ENCODE measurements at regions of chr12 and their contacts with region 1.

Region 1: DNA sequence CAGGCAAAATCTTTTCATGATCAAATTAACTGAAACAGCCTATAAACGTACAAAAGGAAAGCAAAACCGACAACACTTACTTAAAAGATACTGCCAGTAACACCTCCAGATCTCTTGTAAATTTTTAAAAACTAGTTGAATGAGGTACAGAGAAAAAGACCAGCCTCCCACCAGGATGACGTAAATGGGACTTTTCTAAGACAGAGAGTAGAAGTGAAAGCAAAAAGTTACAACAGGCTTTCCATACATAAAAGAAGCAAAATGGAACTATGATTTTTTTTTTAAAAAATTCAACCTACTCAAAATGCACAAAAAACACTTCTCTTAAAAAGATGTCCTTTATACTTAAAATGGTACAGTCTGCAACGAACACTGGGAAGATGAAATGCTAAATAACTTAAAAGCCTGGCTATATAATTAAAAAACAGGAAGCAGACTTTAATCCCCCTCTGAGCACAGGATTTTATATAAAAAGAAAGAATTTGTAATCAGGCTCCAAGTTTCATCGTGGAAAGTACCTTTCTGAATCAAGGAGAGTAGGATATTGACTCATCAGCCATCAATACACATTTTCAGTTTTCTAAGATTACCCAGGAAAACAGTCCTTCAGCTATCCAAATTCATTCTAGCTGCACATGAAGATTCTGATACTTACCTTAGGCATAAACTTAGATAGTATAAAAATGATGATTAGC is 14.2 kb upstream of the MYO1A start:
- DNase-seq: no peak
- ATAC-seq: no peak
- H3K4me3 ChIP-seq: no peak overlapping the region
- H3K27ac ChIP-seq: no peak overlapping the region
- H3K4me1 ChIP-seq: 0 out of 3 replicates have a peak, but pooled peaks cover 6% of the 10 kb centered on the region
- CTCF ChIP-seq: no peak
- EP300 ChIP-seq: no peak
- POLR2A ChIP-seq: no peak
- RAD21 ChIP-seq: no peak

Region 2: GRCh38 chr12:56931474-56931978 is 132.6 kb before region 1 on chr12:
- CTCF ChIA-PET with region 1: no interaction called
- POLR2A ChIA-PET with region 1: no interaction called
- DNase-seq: peak in 1 of 2 experiments; percentile 55
- ATAC-seq: peak in 1 of 2 experiments; percentile 39; a peak in 1 of 6 replicates
- H3K4me3 ChIP-seq: no peak overlapping the region
- H3K27ac ChIP-seq: peak overlapping the region; percentile 16 to 37; a peak in 1 of 6 replicates
- H3K4me1 ChIP-seq: peaks cover 17% of the 10 kb centered on the region
- CTCF ChIP-seq: no peak
- EP300 ChIP-seq: no peak
- POLR2A ChIP-seq: no peak
- RAD21 ChIP-seq: no peak

Region 3: GRCh38 chr12:56998981-56999380 is 65.2 kb before region 1 on chr12:
- CTCF ChIA-PET with region 1: interaction called, 161 read pairs
- POLR2A ChIA-PET with region 1: no interaction called
- DNase-seq: no peak
- ATAC-seq: no peak
- H3K4me3 ChIP-seq: no peak overlapping the region
- H3K27ac ChIP-seq: no peak overlapping the region
- H3K4me1 ChIP-seq: peaks cover 13% of the 10 kb centered on the region
- CTCF ChIP-seq: no peak
- EP300 ChIP-seq: no peak
- POLR2A ChIP-seq: no peak
- RAD21 ChIP-seq: no peak

Region 4: DNA sequence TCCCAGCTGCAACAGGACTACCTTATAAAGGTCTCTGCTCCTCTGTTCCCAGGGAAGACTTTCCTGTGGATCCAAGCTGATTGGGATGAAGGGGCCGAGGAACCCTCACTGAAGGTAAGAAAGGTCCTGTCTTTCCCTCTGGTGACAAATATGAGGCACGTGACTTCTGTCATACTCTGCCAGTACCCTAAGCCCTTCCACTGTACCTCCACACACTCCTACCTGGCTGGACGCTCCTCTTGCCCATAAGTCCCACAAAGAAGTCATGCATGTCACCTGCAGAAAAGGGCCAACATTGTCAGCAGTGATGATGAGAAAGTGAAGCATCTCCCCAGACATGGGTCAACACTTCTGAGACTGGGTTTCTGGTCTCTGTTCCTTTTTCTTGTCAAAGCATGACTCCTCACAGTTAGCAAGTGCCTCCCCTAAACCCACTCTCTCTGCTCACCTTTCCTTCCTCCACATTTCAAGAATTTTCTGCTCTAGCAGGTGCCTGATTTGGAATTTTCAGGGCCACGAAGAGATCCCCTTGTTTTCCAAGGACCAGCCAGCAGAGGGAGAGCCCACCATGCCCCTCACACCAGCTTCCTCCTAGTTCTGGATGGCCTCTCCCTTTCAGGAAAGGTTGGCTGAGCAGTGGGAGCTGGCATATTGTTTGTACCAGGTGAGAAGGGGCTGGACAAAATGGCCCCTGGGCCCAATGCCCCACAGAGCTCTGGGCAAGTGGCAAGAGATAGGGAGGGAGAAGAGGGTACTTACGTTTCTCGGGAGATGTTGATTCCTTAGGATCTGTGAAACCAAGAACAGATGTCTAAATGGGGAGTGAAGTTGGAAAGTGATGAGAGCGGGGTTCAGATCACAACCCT is 51.3 kb before region 1 on chr12:
- CTCF ChIA-PET with region 1: interaction called, 161 read pairs
- POLR2A ChIA-PET with region 1: no interaction called
- DNase-seq: no peak
- ATAC-seq: no peak
- H3K4me3 ChIP-seq: no peak overlapping the region
- H3K27ac ChIP-seq: no peak overlapping the region
- H3K4me1 ChIP-seq: peaks cover 15% of the 10 kb centered on the region
- CTCF ChIP-seq: no peak
- EP300 ChIP-seq: no peak
- POLR2A ChIP-seq: no peak
- RAD21 ChIP-seq: no peak

Region 5: GRCh38 chr12:57046947-57047890 is 16.9 kb before region 1 on chr12:
- CTCF ChIA-PET with region 1: interaction called, 44 read pairs
- POLR2A ChIA-PET with region 1: no interaction called
- DNase-seq: no peak
- ATAC-seq: no peak
- H3K4me3 ChIP-seq: no peak overlapping the region
- H3K27ac ChIP-seq: no peak overlapping the region
- H3K4me1 ChIP-seq: peaks cover 23% of the 10 kb centered on the region; the same call in 2 of the 3 replicates
- CTCF ChIP-seq: no peak
- EP300 ChIP-seq: no peak
- POLR2A ChIP-seq: no peak
- RAD21 ChIP-seq: no peak

Region 6: DNA sequence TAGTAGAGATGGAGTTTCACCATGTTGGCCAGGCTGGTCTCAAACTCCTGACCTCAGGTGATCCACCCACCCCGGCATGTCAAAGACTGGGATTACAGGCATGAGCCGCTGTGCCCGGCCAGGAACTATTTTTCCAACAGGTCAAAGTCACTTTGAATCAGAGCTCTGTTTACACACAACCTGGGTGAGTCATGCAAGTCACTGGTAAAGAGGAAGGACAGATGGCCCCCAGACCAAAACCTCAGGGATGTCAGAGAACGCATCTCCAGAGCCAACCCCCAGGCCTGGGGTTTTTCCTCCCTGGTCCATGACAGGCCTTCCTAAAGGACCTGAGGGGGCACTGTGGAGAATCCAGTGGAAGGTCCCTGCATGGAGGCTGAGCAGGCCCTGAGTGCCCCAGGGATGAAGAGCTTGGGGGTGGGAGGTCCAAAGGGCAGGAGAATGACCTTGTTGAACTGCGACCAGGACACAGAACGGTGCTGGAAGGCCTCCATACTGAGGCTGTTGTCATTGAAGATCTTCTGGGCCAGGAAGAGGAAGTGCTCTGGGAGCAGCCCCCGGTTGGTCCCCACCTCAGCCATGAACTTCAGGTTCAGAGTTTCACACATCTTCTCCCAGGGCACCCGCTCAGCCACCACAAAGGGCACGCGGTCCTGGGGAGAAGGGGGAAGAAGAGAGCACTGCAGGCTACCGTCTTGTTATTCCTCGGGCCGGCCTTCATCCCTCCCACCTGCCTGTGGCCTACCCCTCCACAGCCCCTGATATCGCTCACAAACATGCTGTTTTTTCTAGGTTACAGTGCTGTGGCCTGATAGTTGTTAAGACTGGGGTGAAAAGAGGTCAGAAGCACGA is 37.9 kb after region 1 on chr12:
- CTCF ChIA-PET with region 1: interaction called, 440 read pairs
- POLR2A ChIA-PET with region 1: no interaction called
- DNase-seq: peak; percentile 66 to 74
- ATAC-seq: peak; percentile 58 to 65
- H3K4me3 ChIP-seq: no peak overlapping the region
- H3K27ac ChIP-seq: peak overlapping the region; percentile 13 to 68; a peak in 4 of 6 replicates
- H3K4me1 ChIP-seq: peaks cover 19% of the 10 kb centered on the region
- CTCF ChIP-seq: no peak
- EP300 ChIP-seq: no peak
- POLR2A ChIP-seq: no peak
- RAD21 ChIP-seq: no peak

Region 7: GRCh38 chr12:57182921-57183790 is 119.0 kb after region 1 on chr12:
- CTCF ChIA-PET with region 1: interaction called, 44 read pairs
- POLR2A ChIA-PET with region 1: no interaction called
- DNase-seq: peak; percentile 73 to 94
- ATAC-seq: peak; percentile 79 to 95
- H3K4me3 ChIP-seq: no peak overlapping the region
- H3K27ac ChIP-seq: no peak overlapping the region
- H3K4me1 ChIP-seq: no peaks in the 10 kb centered on the region
- CTCF ChIP-seq: peak; percentile 85
- EP300 ChIP-seq: no peak
- POLR2A ChIP-seq: no peak
- RAD21 ChIP-seq: peak; percentile 91

Region 8: DNA sequence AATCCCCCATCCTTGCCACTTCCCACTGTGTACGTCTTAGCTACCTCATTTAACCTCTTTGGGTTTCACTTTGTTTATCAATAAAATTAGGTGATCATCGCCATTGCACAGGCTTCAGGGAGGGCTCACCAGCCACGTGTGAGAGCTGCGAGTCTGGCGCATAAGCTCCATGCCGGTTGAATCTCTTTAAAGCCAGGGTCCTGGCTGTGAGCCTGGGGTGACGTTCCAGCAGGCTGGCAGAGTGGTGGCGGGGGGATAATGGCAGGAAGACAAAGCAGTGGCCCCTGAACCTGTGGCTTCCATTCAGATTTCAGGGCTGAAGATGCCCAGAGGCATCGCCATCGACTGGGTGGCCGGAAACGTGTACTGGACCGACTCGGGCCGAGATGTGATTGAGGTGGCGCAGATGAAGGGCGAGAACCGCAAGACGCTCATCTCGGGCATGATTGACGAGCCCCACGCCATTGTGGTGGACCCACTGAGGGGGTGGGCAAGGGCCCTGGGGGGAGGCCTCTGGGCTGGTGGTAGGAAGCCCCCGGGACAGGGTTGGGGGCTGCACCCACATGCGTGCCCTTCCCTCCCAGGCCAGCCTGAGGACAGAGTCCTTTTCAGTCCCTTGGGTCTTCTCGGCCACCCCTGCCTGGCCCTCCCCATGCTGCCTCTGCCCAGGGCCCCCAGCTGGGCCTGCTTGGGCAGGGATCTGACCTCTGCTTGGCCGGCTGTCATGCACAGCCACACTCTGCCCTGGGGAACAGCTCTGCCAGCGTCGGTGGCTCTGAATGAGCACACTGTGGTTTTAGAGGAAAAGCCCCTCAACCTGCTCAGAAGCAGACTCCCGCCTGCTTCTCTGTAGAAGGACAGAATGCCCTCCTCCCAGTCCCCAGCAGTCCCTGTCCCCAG is 143.8 kb after region 1 on chr12:
- CTCF ChIA-PET with region 1: no interaction called
- POLR2A ChIA-PET with region 1: no interaction called
- DNase-seq: no peak
- ATAC-seq: no peak
- H3K4me3 ChIP-seq: no peak overlapping the region
- H3K27ac ChIP-seq: no peak overlapping the region
- H3K4me1 ChIP-seq: 0 out of 3 replicates have a peak, but pooled peaks cover 2% of the 10 kb centered on the region
- CTCF ChIP-seq: no peak
- EP300 ChIP-seq: no peak
- POLR2A ChIP-seq: no peak
- RAD21 ChIP-seq: no peak